MCF 10A (cell line): ENCODE measurements at regions of chr5 and their contacts with region 1.

Region 1: DNA sequence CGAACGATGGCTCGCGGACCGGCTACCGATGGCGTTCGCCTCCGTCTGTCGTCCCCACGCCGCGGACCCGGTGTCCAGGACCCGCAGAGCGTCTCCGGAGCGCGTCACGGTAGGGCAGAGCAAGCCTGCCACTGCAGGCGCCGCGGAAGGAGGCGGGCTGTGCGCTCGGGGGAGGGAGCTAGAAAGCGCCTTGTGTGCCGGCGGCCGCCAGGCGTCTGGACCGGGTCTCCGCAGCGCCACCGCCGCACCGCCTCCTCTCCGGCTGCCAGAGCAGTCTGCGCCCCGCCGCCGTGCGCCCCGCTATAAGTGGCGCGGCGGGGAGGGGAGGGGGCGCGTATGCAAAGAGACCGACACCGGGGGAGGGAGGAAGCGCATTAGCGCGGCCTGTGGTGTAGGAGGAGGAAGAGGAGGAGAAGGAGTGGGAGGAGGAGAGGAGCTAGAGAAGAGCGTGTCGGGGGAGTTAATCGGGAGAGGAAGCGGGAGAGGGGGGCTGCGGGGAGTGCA is at the start of gene ENC1:
- DNase-seq: peak; percentile 87
- H3K4me3 Mint-ChIP-seq: peak within 1 kb of the TSS; percentile 87
- H3K27ac Mint-ChIP-seq: peak within 1 kb of the TSS; percentile 90
- H3K4me1 Mint-ChIP-seq: peaks cover 48% of the 10 kb centered on the region
- H3K27me3 Mint-ChIP-seq: no peaks in the 10 kb centered on the region
- CTCF ChIP-seq: peak; percentile 42
- total RNA-seq, gene ENC1: 10.7 and 12.9 TPM in 2 replicates

Region 2: GRCh38 chr5:73938280-73938937 is 702.1 kb before region 1 on chr5:
- CTCF ChIA-PET with region 1: interaction called, 4 read pairs
- POLR2A ChIA-PET with region 1: interaction called, 15 read pairs
- intact Hi-C with region 1: loop called (anchors 1 kb)
- DNase-seq: peak; percentile 91
- H3K4me3 Mint-ChIP-seq: peak overlapping the region; percentile 60
- H3K27ac Mint-ChIP-seq: peak overlapping the region; percentile 98
- H3K4me1 Mint-ChIP-seq: peaks cover 47% of the 10 kb centered on the region
- H3K27me3 Mint-ChIP-seq: no peaks in the 10 kb centered on the region
- CTCF ChIP-seq: no peak

Region 3: DNA sequence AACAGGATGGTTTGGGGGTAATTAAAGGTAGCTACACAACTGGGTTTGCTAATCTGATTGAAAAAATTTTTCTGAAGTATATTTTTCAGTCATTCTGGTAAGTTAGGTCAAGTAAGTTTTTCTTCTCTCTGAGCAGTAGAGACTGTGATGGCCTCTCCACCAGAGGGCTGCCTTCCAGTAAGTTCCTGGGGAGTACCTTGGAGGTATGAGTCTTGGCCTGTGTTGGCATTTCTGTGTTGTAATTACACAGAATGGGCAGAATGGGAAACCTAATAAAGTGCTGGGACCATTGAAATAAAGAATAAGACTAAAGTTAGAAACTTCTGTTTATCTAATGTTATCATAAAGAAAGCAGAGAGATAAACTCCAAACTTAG is 583.7 kb before region 1 on chr5:
- CTCF ChIA-PET with region 1: interaction called, 19 read pairs
- POLR2A ChIA-PET with region 1: no interaction called
- intact Hi-C with region 1: loop called (anchors 1 kb)
- DNase-seq: peak; percentile 52
- H3K4me3 Mint-ChIP-seq: no peak overlapping the region
- H3K27ac Mint-ChIP-seq: no peak overlapping the region
- H3K4me1 Mint-ChIP-seq: peaks cover 10% of the 10 kb centered on the region
- H3K27me3 Mint-ChIP-seq: no peaks in the 10 kb centered on the region
- CTCF ChIP-seq: peak; percentile 45

Region 4: GRCh38 chr5:74251141-74252035 is 389.1 kb before region 1 on chr5:
- CTCF ChIA-PET with region 1: no interaction called
- POLR2A ChIA-PET with region 1: interaction called, 7 read pairs
- intact Hi-C with region 1: loop called (anchors 2 kb)
- DNase-seq: peak; percentile 94
- H3K4me3 Mint-ChIP-seq: no peak overlapping the region
- H3K27ac Mint-ChIP-seq: peak overlapping the region; percentile 82
- H3K4me1 Mint-ChIP-seq: peaks cover 22% of the 10 kb centered on the region
- H3K27me3 Mint-ChIP-seq: no peaks in the 10 kb centered on the region
- CTCF ChIP-seq: no peak

Region 5: GRCh38 chr5:74424162-74424850 is 216.2 kb before region 1 on chr5:
- CTCF ChIA-PET with region 1: interaction called, 5 read pairs
- POLR2A ChIA-PET with region 1: interaction called, 8 read pairs
- intact Hi-C with region 1: loop called (anchors 1 kb)
- DNase-seq: peak; percentile 95
- H3K4me3 Mint-ChIP-seq: peak overlapping the region; percentile 28
- H3K27ac Mint-ChIP-seq: peak overlapping the region; percentile 57
- H3K4me1 Mint-ChIP-seq: peaks cover 20% of the 10 kb centered on the region
- H3K27me3 Mint-ChIP-seq: no peaks in the 10 kb centered on the region
- CTCF ChIP-seq: no peak

Region 6: GRCh38 chr5:74625742-74626241 is 14.7 kb before region 1 on chr5:
- CTCF ChIA-PET with region 1: interaction called, 5 read pairs
- POLR2A ChIA-PET with region 1: interaction called, 22 read pairs
- intact Hi-C with region 1: no loop called
- DNase-seq: peak; percentile 17
- H3K4me3 Mint-ChIP-seq: no peak overlapping the region
- H3K27ac Mint-ChIP-seq: peak overlapping the region; percentile 35
- H3K4me1 Mint-ChIP-seq: peaks cover 28% of the 10 kb centered on the region
- H3K27me3 Mint-ChIP-seq: no peaks in the 10 kb centered on the region
- CTCF ChIP-seq: no peak

Region 7: DNA sequence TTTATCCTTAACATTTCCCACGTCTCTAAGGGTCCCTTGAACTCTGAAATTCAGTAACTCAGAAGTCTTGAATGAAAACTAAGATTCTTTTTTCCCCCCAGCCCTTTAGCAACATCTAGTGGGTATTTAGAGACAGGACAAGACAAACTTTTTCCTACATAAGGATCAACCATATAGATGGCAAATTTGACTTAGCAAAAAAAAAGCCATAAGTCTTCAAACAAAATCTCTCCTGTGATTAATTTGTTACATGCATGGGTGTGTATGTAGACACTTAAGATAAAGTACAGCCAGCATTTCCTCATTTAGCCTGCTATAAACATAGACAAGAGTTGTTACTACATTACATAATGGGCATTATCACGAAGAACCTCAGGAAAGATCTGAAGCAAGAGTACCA is 625.2 kb after region 1 on chr5:
- CTCF ChIA-PET with region 1: no interaction called
- POLR2A ChIA-PET with region 1: no interaction called
- intact Hi-C with region 1: no loop called
- DNase-seq: peak; percentile 47
- H3K4me3 Mint-ChIP-seq: no peak overlapping the region
- H3K27ac Mint-ChIP-seq: no peak overlapping the region
- H3K4me1 Mint-ChIP-seq: no peaks in the 10 kb centered on the region
- H3K27me3 Mint-ChIP-seq: no peaks in the 10 kb centered on the region
- CTCF ChIP-seq: peak; percentile 63